ENCODE measurements at regions of chr17 and their contacts with region 1.

Region 1: GRCh38 chr17:82429824-82430223 is 11.4 kb upstream of the OGFOD3 start:
- DNase-seq: no peak
- H3K4me3 ChIP-seq: no peak overlapping the region
- H3K27ac ChIP-seq: no peak overlapping the region
- H3K4me1 ChIP-seq: peaks cover 0 to 7% (median 3%) of the 10 kb centered on the region in 4 donors
- H3K27me3 ChIP-seq: no peaks in the 10 kb centered on the region
- CTCF ChIP-seq: no peak

Region 2: GRCh38 chr17:82351716-82352488 is 77.9 kb before region 1 on chr17:
- intact Hi-C with region 1: loop called (anchors 5 kb)
- DNase-seq: peak; percentile 85 to 89
- H3K4me3 ChIP-seq: no peak overlapping the region
- H3K27ac ChIP-seq: no peak overlapping the region
- H3K4me1 ChIP-seq: peaks cover 0 to 16% (median 8%) of the 10 kb centered on the region in 4 donors
- H3K27me3 ChIP-seq: peaks cover 0 to 59% of the 10 kb centered on the region in 2 donors
- CTCF ChIP-seq: peak; percentile 95 to 97

Measured in tibial artery (tissue), 4 donors.